Panc1 (cell line): ENCODE measurements at regions of chr9 and their contacts with region 1.

Region 1: GRCh38 chr9:37496020-37496419 is 10.3 kb downstream of the POLR1E start:
- DNase-seq: no peak
- ATAC-seq: no peak; the same call in 1 of the 2 replicates
- H3K4me3 ChIP-seq: no peak overlapping the region
- H3K27ac ChIP-seq: no peak overlapping the region
- H3K4me1 ChIP-seq: no peaks in the 10 kb centered on the region
- H3K27me3 ChIP-seq: no peaks in the 10 kb centered on the region
- CTCF ChIP-seq: no peak

Region 2: DNA sequence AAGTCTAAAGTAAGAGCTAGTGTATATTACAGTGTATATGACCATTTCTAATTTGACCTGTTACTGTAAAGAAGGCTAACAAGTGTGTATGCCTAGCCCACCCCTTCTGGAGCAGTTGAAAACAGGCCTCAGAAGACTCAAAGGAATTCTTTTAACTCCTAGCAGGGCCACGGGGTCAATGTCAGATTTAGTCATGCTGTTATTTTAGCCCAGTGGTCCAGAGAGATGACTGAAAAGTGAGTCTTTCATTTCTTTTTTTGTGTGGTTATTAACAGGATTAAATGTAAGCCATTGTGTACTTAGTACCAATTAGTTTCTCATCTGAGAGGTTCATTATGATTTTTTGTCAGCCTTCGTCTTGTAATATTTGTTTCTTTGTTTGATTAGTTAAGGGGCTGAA is 351.3 kb before region 1 on chr9:
- CTCF ChIA-PET with region 1: no interaction called
- POLR2A ChIA-PET with region 1: no interaction called
- in situ Hi-C with region 1: no loop called
- intact Hi-C with region 1: no loop called
- DNase-seq: no peak
- ATAC-seq: peak; percentile 63
- H3K4me3 ChIP-seq: no peak overlapping the region
- H3K27ac ChIP-seq: no peak overlapping the region
- H3K4me1 ChIP-seq: peaks cover 3% of the 10 kb centered on the region; the same call in 1 of the 2 replicates
- H3K27me3 ChIP-seq: no peaks in the 10 kb centered on the region
- CTCF ChIP-seq: no peak

Region 3: DNA sequence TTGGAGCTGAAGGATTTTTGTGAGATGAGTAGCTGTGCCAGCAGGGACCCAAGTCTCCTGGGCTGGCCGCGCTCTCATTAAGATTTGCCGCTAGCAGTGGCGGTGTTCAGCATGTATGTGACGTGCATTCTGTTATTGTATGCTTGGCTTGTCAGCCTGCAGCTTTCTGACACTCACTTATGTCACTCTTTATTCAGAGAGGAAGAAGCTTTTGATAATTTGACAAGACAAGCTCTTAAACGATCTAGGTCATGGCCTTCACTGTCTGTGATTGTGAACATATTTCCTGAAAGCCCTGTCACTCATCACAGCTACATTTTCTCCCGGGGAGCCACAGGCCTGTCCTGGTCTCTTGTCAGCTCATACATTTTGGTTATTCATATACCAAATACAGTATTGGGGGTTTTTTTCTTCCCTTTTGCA is 171.7 kb before region 1 on chr9:
- CTCF ChIA-PET with region 1: no interaction called
- POLR2A ChIA-PET with region 1: no interaction called
- in situ Hi-C with region 1: no loop called
- intact Hi-C with region 1: no loop called
- DNase-seq: no peak
- ATAC-seq: no peak; the same call in 1 of the 2 replicates
- H3K4me3 ChIP-seq: no peak overlapping the region
- H3K27ac ChIP-seq: no peak overlapping the region
- H3K4me1 ChIP-seq: peaks cover 5% of the 10 kb centered on the region; the same call in 1 of the 2 replicates
- H3K27me3 ChIP-seq: no peaks in the 10 kb centered on the region
- CTCF ChIP-seq: no peak

Region 4: GRCh38 chr9:37626708-37627293 is 130.8 kb after region 1 on chr9:
- CTCF ChIA-PET with region 1: no interaction called
- POLR2A ChIA-PET with region 1: no interaction called
- in situ Hi-C with region 1: no loop called
- intact Hi-C with region 1: no loop called
- DNase-seq: no peak
- ATAC-seq: no peak
- H3K4me3 ChIP-seq: no peak overlapping the region
- H3K27ac ChIP-seq: no peak overlapping the region
- H3K4me1 ChIP-seq: no peaks in the 10 kb centered on the region
- H3K27me3 ChIP-seq: no peaks in the 10 kb centered on the region
- CTCF ChIP-seq: no peak

Region 5: GRCh38 chr9:37732086-37732741 is 236.2 kb after region 1 on chr9:
- CTCF ChIA-PET with region 1: no interaction called
- POLR2A ChIA-PET with region 1: no interaction called
- in situ Hi-C with region 1: no loop called
- intact Hi-C with region 1: loop called (anchors 10 kb)
- DNase-seq: no peak
- ATAC-seq: no peak
- H3K4me3 ChIP-seq: no peak overlapping the region
- H3K27ac ChIP-seq: no peak overlapping the region
- H3K4me1 ChIP-seq: peaks cover 12% of the 10 kb centered on the region
- H3K27me3 ChIP-seq: peaks cover 25% of the 10 kb centered on the region; the same call in 1 of the 2 replicates
- CTCF ChIP-seq: no peak

Region 6: DNA sequence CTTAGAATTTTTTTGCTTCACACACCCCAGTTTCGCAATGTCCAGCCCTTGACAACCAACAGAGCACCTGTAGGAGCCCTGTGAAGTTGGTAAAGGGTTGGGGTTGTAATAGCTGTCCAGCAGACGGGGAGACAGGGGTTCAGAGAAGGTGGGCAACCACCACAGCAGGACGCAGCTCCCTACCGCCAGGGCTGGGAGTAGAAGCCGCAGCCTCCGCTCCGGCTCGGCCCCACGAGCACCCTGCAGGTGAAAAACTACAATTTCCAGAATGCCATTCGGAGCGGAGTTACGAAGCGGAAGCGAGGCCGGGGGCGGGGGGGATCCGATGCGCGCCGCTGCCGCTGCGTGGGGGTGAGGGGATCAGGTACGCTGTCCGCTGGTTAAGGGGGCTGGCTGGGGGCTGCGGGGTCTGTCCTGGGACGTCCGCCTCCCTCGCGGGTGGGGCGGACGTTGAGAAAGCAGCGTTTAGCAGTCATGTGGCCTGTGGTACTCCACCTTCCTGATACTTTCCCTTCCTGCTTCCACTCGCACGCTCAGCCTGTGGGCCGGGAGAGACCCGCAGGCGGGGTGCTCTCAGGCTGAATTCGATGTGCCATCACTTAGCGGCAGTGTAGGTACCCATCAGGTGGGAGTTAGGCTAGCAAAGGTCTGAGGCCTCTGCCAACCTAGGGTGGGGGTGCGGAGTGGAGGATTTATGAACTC is 257.6 kb after region 1 on chr9 and contains the start of gene TRMT10B:
- CTCF ChIA-PET with region 1: interaction called, 12 read pairs
- POLR2A ChIA-PET with region 1: no interaction called
- in situ Hi-C with region 1: no loop called
- intact Hi-C with region 1: no loop called
- DNase-seq: no peak
- ATAC-seq: peak; percentile 96
- H3K4me3 ChIP-seq: peak within 1 kb of the TSS; percentile 81 to 95
- H3K27ac ChIP-seq: peak within 1 kb of the TSS; percentile 98
- H3K4me1 ChIP-seq: peaks cover 8% of the 10 kb centered on the region
- H3K27me3 ChIP-seq: no peaks in the 10 kb centered on the region
- CTCF ChIP-seq: no peak
- total RNA-seq, gene TRMT10B: 9.8 TPM